Activated CD8-positive, alpha-beta T cell treated with anti-CD3 and anti-CD28 coated beads for 36 hours (primary cell): ENCODE measurements at regions of chr20 and their contacts with region 1.

Region 1: GRCh38 chr20:59850018-59850641 is 83.3 kb downstream of the SYCP2 start:
- DNase-seq: no peak
- ATAC-seq: no peak
- H3K4me3 Mint-ChIP-seq: no peak overlapping the region
- H3K27ac Mint-ChIP-seq: no peak overlapping the region
- H3K4me1 Mint-ChIP-seq: no peaks in the 10 kb centered on the region
- H3K27me3 Mint-ChIP-seq: no peaks in the 10 kb centered on the region
- CTCF ChIP-seq: peak; percentile 73

Region 2: GRCh38 chr20:59472059-59472458 is 378.1 kb before region 1 on chr20:
- CTCF ChIA-PET with region 1: no interaction called
- POLR2A ChIA-PET with region 1: no interaction called
- intact Hi-C with region 1: no loop called
- DNase-seq: no peak
- ATAC-seq: no peak
- H3K4me3 Mint-ChIP-seq: no peak overlapping the region
- H3K27ac Mint-ChIP-seq: no peak overlapping the region
- H3K4me1 Mint-ChIP-seq: no peaks in the 10 kb centered on the region
- H3K27me3 Mint-ChIP-seq: peaks cover 4% of the 10 kb centered on the region
- CTCF ChIP-seq: no peak

Region 3: DNA sequence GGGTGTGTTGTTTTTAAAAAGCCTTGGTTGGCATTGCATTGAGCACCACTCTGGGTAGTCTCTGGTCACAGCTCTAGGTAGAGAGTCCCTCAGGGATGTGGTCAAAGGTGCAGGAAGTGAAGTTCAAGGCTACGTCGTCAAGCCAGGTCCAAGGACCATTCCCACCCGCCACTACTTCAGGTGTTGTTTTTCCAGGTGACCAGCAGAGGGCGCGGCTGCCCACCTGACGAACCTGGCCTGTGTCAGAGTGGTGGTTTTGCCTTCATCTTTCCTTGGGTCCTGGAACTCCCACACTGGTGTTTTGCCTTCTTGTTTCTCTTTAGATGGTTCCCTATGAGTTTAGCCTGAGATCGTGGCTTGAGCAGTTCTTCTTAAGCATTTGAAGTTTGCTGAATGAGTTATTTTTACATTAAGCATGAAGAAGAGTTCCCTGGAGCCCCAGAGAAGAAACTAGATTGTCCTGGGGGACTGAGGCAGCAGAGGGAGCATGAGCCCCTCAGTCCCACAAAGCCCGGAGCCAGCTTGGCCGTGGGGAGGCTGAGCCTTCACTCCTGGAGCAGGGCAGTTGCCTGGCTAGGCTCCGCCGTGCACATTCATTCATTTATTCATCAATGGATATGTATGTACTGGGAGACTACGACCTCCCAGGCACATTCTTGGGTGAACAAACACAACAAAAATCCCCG is 251.4 kb before region 1 on chr20:
- CTCF ChIA-PET with region 1: interaction called, 18 read pairs
- POLR2A ChIA-PET with region 1: no interaction called
- intact Hi-C with region 1: no loop called
- DNase-seq: peak; percentile 62
- ATAC-seq: peak; percentile 68
- H3K4me3 Mint-ChIP-seq: no peak overlapping the region
- H3K27ac Mint-ChIP-seq: no peak overlapping the region
- H3K4me1 Mint-ChIP-seq: no peaks in the 10 kb centered on the region
- H3K27me3 Mint-ChIP-seq: peaks cover 26% of the 10 kb centered on the region
- CTCF ChIP-seq: peak; percentile 83

Region 4: GRCh38 chr20:59782986-59783640 is 67.0 kb before region 1 on chr20:
- CTCF ChIA-PET with region 1: interaction called, 24 read pairs
- POLR2A ChIA-PET with region 1: no interaction called
- intact Hi-C with region 1: loop called (anchors 10 kb)
- DNase-seq: peak; percentile 71
- ATAC-seq: peak; percentile 64
- H3K4me3 Mint-ChIP-seq: no peak overlapping the region
- H3K27ac Mint-ChIP-seq: no peak overlapping the region
- H3K4me1 Mint-ChIP-seq: no peaks in the 10 kb centered on the region
- H3K27me3 Mint-ChIP-seq: no peaks in the 10 kb centered on the region
- CTCF ChIP-seq: peak; percentile 76

Region 5: GRCh38 chr20:59839400-59839799 is 10.7 kb before region 1 on chr20:
- CTCF ChIA-PET with region 1: interaction called, 29 read pairs
- POLR2A ChIA-PET with region 1: no interaction called
- intact Hi-C with region 1: no loop called
- DNase-seq: no peak
- ATAC-seq: no peak
- H3K4me3 Mint-ChIP-seq: no peak overlapping the region
- H3K27ac Mint-ChIP-seq: no peak overlapping the region
- H3K4me1 Mint-ChIP-seq: peaks cover 5% of the 10 kb centered on the region
- H3K27me3 Mint-ChIP-seq: peaks cover 23% of the 10 kb centered on the region
- CTCF ChIP-seq: no peak

Region 6: GRCh38 chr20:59861401-59861800 is 11.3 kb after region 1 on chr20:
- CTCF ChIA-PET with region 1: interaction called, 10 read pairs
- POLR2A ChIA-PET with region 1: no interaction called
- intact Hi-C with region 1: no loop called
- DNase-seq: no peak
- ATAC-seq: no peak
- H3K4me3 Mint-ChIP-seq: no peak overlapping the region
- H3K27ac Mint-ChIP-seq: no peak overlapping the region
- H3K4me1 Mint-ChIP-seq: no peaks in the 10 kb centered on the region
- H3K27me3 Mint-ChIP-seq: no peaks in the 10 kb centered on the region
- CTCF ChIP-seq: no peak

Region 7: GRCh38 chr20:59985864-59986263 is 135.7 kb after region 1 on chr20:
- CTCF ChIA-PET with region 1: no interaction called
- POLR2A ChIA-PET with region 1: no interaction called
- intact Hi-C with region 1: no loop called
- DNase-seq: peak; percentile 37
- ATAC-seq: no peak
- H3K4me3 Mint-ChIP-seq: no peak overlapping the region
- H3K27ac Mint-ChIP-seq: no peak overlapping the region
- H3K4me1 Mint-ChIP-seq: no peaks in the 10 kb centered on the region
- H3K27me3 Mint-ChIP-seq: no peaks in the 10 kb centered on the region
- CTCF ChIP-seq: no peak